ENCODE measurements at regions of chr4 and their contacts with region 1.

Region 1: DNA sequence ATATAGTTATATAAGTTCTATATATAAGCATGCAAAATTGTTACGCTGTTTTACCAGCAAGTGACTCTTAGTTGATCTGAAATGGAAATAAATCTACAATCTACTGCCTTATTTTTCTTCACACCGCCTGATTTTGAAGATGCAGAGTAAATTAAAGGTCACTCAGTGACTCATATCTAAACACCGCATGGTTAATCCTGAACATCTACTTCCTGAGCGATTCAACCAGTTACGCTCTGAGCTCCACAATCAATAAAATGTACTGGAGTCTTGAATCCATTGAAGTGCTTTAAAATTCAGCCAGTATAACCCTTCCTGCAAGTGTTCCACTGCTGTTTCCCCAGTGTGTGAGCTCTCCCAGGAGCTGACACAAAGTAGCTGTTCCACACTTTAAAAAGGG is 192.8 kb downstream of the SLC7A11 start:
- DNase-seq: no peak
- ATAC-seq: no peak
- H3K4me3 ChIP-seq: no peak overlapping the region
- H3K27ac ChIP-seq: no peak overlapping the region
- H3K4me1 ChIP-seq: no peaks in the 10 kb centered on the region
- H3K27me3 ChIP-seq: no peaks in the 10 kb centered on the region
- CTCF ChIP-seq: no peak

Region 2: DNA sequence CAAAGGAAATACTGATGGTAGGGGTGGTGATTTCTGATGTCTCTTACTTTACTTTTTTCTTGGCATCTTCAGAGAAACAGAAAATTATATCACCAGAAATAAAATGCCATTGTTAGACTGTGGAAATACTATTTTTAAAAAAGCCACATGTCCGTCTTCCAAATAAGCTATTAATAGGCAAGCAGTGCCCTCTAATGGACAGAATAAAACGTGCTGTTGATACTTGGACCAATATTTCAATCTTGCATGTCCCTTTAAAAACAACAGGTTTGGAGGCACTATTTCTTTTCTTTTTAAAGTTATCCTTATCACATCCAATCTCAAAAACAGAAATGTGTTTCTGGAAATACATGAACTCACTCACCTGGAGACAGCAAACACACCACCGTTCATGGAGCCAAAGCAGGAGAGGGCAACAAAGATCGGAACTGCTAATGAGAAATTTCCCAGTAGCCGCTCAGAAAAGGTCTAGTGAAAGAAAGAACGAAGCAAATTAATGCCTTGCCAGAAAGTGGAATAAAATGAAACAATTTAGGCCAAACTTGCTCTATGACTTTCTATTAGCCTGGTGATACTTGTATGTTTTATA is 133.6 kb after region 1 on chr4:
- intact Hi-C with region 1: loop called in 1 of 2 experiments (anchors 10 kb)
- DNase-seq: peak in 2 of 4 donors; percentile 47 to 71
- ATAC-seq: peak; percentile 83
- H3K4me3 ChIP-seq: no peak overlapping the region
- H3K27ac ChIP-seq: no peak overlapping the region
- H3K4me1 ChIP-seq: no peaks in the 10 kb centered on the region
- H3K27me3 ChIP-seq: no peaks in the 10 kb centered on the region
- CTCF ChIP-seq: peak; percentile 31 to 53

Measured in left lung (tissue), 14 donors.